ENCODE measurements at regions of chr10 and their contacts with region 1.

Region 1: DNA sequence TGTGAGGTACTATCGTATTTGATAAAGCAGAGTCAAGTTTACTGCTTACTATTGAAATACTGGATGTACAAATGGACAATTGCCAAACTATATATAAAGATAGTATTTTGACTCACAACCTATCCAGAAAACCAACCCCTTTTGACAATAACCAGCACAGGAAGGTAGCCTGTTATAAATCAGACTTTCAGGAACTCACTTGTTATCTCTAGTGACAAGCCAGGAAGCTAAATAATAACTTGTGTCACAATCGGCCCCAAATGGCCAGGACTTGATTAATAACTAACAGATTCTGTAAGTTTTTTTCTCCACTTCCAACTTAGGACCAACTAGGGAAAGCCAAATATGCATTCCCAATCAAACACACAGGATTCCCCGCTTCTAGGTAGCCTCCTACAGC is 38.8 kb upstream of the SLC35G1 start:
- DNase-seq: no peak
- ATAC-seq: no peak
- H3K4me3 ChIP-seq: no peak overlapping the region
- H3K4me3 Mint-ChIP-seq: no peak overlapping the region
- H3K27ac ChIP-seq: no peak overlapping the region
- H3K27ac Mint-ChIP-seq: no peak overlapping the region
- H3K4me1 ChIP-seq: no peaks in the 10 kb centered on the region
- H3K4me1 Mint-ChIP-seq: no peaks in the 10 kb centered on the region
- H3K27me3 ChIP-seq: peaks cover 0 to 4% of the 10 kb centered on the region in 2 experiments
- H3K27me3 Mint-ChIP-seq: peaks cover 2 to 11% of the 10 kb centered on the region in 2 donors

Region 2: GRCh38 chr10:93827056-93827804 is 27.7 kb before region 1 on chr10:
- CTCF ChIA-PET with region 1: interaction called in 1 of 2 experiments, 10 read pairs
- POLR2A ChIA-PET with region 1: no interaction called
- DNase-seq: peak in 1 of 35 experiments; percentile 17
- ATAC-seq: no peak
- H3K4me3 ChIP-seq: no peak overlapping the region
- H3K4me3 Mint-ChIP-seq: no peak overlapping the region
- H3K27ac ChIP-seq: no peak overlapping the region
- H3K27ac Mint-ChIP-seq: no peak overlapping the region
- H3K4me1 ChIP-seq: no peaks in the 10 kb centered on the region
- H3K4me1 Mint-ChIP-seq: peaks cover 0 to 7% (median 3%) of the 10 kb centered on the region in 3 donors
- H3K27me3 ChIP-seq: peaks cover 2 to 5% of the 10 kb centered on the region in 2 experiments
- H3K27me3 Mint-ChIP-seq: no peaks in the 10 kb centered on the region

Region 3: GRCh38 chr10:93926613-93927012 is 71.6 kb after region 1 on chr10:
- CTCF ChIA-PET with region 1: no interaction called
- POLR2A ChIA-PET with region 1: no interaction called
- DNase-seq: no peak
- ATAC-seq: no peak
- H3K4me3 ChIP-seq: no peak overlapping the region
- H3K4me3 Mint-ChIP-seq: no peak overlapping the region
- H3K27ac ChIP-seq: no peak overlapping the region
- H3K27ac Mint-ChIP-seq: no peak overlapping the region
- H3K4me1 ChIP-seq: no peaks in the 10 kb centered on the region
- H3K4me1 Mint-ChIP-seq: no peaks in the 10 kb centered on the region
- H3K27me3 ChIP-seq: peaks cover 0 to 4% of the 10 kb centered on the region in 2 experiments
- H3K27me3 Mint-ChIP-seq: no peaks in the 10 kb centered on the region